CD8-positive, alpha-beta memory T cell (primary cell): ENCODE measurements at regions of chr11 and their contacts with region 1.

Region 1: GRCh38 chr11:67317205-67317887 is 14.0 kb downstream of the SSH3 start:
- DNase-seq: peak; percentile 95 to 99 (median 97)
- H3K4me3 ChIP-seq: peak overlapping the region; percentile 93
- H3K4me3 Mint-ChIP-seq: peak overlapping the region; percentile 94 to 100 (median 96)
- H3K27ac ChIP-seq: peak overlapping the region; percentile 82
- H3K27ac Mint-ChIP-seq: peak overlapping the region; percentile 84 to 98 (median 96)
- H3K4me1 ChIP-seq: peaks cover 20% of the 10 kb centered on the region
- H3K4me1 Mint-ChIP-seq: peaks cover 29 to 48% (median 42%) of the 10 kb centered on the region in 3 donors
- H3K27me3 ChIP-seq: no peaks in the 10 kb centered on the region
- H3K27me3 Mint-ChIP-seq: peaks cover 0 to 6% of the 10 kb centered on the region in 2 donors

Region 2: GRCh38 chr11:67082035-67082791 is 235.1 kb before region 1 on chr11:
- CTCF ChIA-PET with region 1: no interaction called
- POLR2A ChIA-PET with region 1: no interaction called
- DNase-seq: peak in 1 of 5 donors; percentile 9
- H3K4me3 ChIP-seq: peak overlapping the region; percentile 12
- H3K4me3 Mint-ChIP-seq: peak overlapping the region in 1 of 7 donors; percentile 33
- H3K27ac ChIP-seq: no peak overlapping the region
- H3K27ac Mint-ChIP-seq: peak overlapping the region in 2 of 8 donors; percentile 17 to 60
- H3K4me1 ChIP-seq: peaks cover 10% of the 10 kb centered on the region
- H3K4me1 Mint-ChIP-seq: peaks cover 6 to 14% (median 6%) of the 10 kb centered on the region in 3 donors
- H3K27me3 ChIP-seq: no peaks in the 10 kb centered on the region
- H3K27me3 Mint-ChIP-seq: peaks cover 4 to 7% of the 10 kb centered on the region in 2 donors

Region 3: DNA sequence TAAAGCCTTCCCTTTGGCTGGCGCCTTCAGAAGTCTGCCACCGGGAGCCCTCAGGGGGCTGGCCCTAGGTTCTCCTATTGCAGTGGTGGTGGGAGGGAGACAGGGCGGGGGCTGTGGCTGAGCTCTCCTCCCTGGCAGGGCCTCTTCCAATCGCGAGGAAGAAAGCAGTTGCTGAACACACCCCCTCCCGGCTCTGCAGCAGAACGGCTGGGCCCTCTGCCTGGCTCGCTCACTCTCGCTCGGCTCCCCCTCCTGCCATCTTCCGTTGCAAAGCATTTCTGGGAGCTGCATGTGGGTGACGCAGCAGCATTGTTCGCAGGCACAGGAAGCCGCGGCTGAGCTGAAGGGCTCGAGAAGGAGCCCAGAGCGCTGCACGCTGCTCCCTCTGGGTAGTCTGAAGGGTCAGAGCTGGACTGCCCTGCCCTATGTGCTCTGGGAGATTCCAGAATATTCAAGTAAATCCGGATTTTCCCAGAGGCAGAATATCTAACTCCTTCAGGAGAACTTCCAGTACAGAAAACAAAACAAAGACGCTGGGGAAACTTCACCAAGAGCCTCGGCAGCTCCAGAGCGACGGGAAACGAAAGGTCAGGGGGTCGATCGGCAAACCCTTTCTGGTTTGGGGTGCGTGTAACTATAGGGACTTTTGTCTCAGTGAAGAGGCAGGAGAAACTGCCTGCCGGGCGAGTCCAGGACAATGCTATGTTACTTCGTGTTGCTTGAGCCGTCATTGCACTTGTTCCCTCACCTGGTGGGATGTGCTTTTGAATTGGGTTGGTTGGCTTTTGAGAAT is 77.4 kb before region 1 on chr11:
- CTCF ChIA-PET with region 1: interaction called, 12 read pairs
- POLR2A ChIA-PET with region 1: interaction called, 10 read pairs
- DNase-seq: peak; percentile 94 to 98 (median 97)
- H3K4me3 ChIP-seq: peak overlapping the region; percentile 98
- H3K4me3 Mint-ChIP-seq: peak overlapping the region; percentile 94 to 100 (median 99)
- H3K27ac ChIP-seq: peak overlapping the region; percentile 99
- H3K27ac Mint-ChIP-seq: peak overlapping the region; percentile 97 to 100 (median 99)
- H3K4me1 ChIP-seq: peaks cover 48% of the 10 kb centered on the region
- H3K4me1 Mint-ChIP-seq: peaks cover 50 to 58% (median 57%) of the 10 kb centered on the region in 3 donors
- H3K27me3 ChIP-seq: no peaks in the 10 kb centered on the region
- H3K27me3 Mint-ChIP-seq: peaks cover 0 to 4% of the 10 kb centered on the region in 2 donors

Region 4: GRCh38 chr11:67288452-67289225 is 28.7 kb before region 1 on chr11:
- CTCF ChIA-PET with region 1: interaction called, 34 read pairs
- POLR2A ChIA-PET with region 1: interaction called, 27 read pairs
- DNase-seq: peak; percentile 86 to 94 (median 91)
- H3K4me3 ChIP-seq: peak overlapping the region; percentile 92
- H3K4me3 Mint-ChIP-seq: peak overlapping the region; percentile 74 to 91 (median 76)
- H3K27ac ChIP-seq: peak overlapping the region; percentile 88
- H3K27ac Mint-ChIP-seq: peak overlapping the region; percentile 86 to 100 (median 99)
- H3K4me1 ChIP-seq: peaks cover 71% of the 10 kb centered on the region
- H3K4me1 Mint-ChIP-seq: peaks cover 50 to 75% (median 51%) of the 10 kb centered on the region in 3 donors
- H3K27me3 ChIP-seq: no peaks in the 10 kb centered on the region
- H3K27me3 Mint-ChIP-seq: peaks cover 0 to 2% of the 10 kb centered on the region in 2 donors

Region 5: GRCh38 chr11:67345920-67346799 is 28.8 kb after region 1 on chr11:
- CTCF ChIA-PET with region 1: interaction called, 13 read pairs
- POLR2A ChIA-PET with region 1: no interaction called
- DNase-seq: peak in 1 of 5 donors; percentile 43
- H3K4me3 ChIP-seq: no peak overlapping the region
- H3K4me3 Mint-ChIP-seq: no peak overlapping the region
- H3K27ac ChIP-seq: no peak overlapping the region
- H3K27ac Mint-ChIP-seq: peak overlapping the region in 4 of 8 donors; percentile 1 to 63 (median 47)
- H3K4me1 ChIP-seq: peaks cover 37% of the 10 kb centered on the region
- H3K4me1 Mint-ChIP-seq: peaks cover 16 to 47% (median 40%) of the 10 kb centered on the region in 3 donors
- H3K27me3 ChIP-seq: no peaks in the 10 kb centered on the region
- H3K27me3 Mint-ChIP-seq: no peaks in the 10 kb centered on the region

Region 6: GRCh38 chr11:67382276-67383136 is 65.2 kb after region 1 on chr11:
- CTCF ChIA-PET with region 1: interaction called, 11 read pairs
- POLR2A ChIA-PET with region 1: no interaction called
- DNase-seq: peak; percentile 76 to 88 (median 77)
- H3K4me3 ChIP-seq: no peak overlapping the region
- H3K4me3 Mint-ChIP-seq: no peak overlapping the region
- H3K27ac ChIP-seq: no peak overlapping the region
- H3K27ac Mint-ChIP-seq: peak overlapping the region in 6 of 8 donors; percentile 2 to 80 (median 72)
- H3K4me1 ChIP-seq: peaks cover 8% of the 10 kb centered on the region
- H3K4me1 Mint-ChIP-seq: peaks cover 5 to 16% (median 11%) of the 10 kb centered on the region in 3 donors
- H3K27me3 ChIP-seq: peaks cover 5% of the 10 kb centered on the region
- H3K27me3 Mint-ChIP-seq: peaks cover 0 to 3% of the 10 kb centered on the region in 2 donors

Region 7: GRCh38 chr11:67492801-67493547 is 175.6 kb after region 1 on chr11:
- CTCF ChIA-PET with region 1: no interaction called
- POLR2A ChIA-PET with region 1: no interaction called
- DNase-seq: no peak
- H3K4me3 ChIP-seq: no peak overlapping the region
- H3K4me3 Mint-ChIP-seq: no peak overlapping the region
- H3K27ac ChIP-seq: no peak overlapping the region
- H3K27ac Mint-ChIP-seq: peak overlapping the region in 1 of 8 donors; percentile 36
- H3K4me1 ChIP-seq: peaks cover 8% of the 10 kb centered on the region
- H3K4me1 Mint-ChIP-seq: peaks cover 7 to 19% (median 12%) of the 10 kb centered on the region in 3 donors
- H3K27me3 ChIP-seq: no peaks in the 10 kb centered on the region
- H3K27me3 Mint-ChIP-seq: no peaks in the 10 kb centered on the region